ENCODE measurements at regions of chr16 and their contacts with region 1.

Region 1: DNA sequence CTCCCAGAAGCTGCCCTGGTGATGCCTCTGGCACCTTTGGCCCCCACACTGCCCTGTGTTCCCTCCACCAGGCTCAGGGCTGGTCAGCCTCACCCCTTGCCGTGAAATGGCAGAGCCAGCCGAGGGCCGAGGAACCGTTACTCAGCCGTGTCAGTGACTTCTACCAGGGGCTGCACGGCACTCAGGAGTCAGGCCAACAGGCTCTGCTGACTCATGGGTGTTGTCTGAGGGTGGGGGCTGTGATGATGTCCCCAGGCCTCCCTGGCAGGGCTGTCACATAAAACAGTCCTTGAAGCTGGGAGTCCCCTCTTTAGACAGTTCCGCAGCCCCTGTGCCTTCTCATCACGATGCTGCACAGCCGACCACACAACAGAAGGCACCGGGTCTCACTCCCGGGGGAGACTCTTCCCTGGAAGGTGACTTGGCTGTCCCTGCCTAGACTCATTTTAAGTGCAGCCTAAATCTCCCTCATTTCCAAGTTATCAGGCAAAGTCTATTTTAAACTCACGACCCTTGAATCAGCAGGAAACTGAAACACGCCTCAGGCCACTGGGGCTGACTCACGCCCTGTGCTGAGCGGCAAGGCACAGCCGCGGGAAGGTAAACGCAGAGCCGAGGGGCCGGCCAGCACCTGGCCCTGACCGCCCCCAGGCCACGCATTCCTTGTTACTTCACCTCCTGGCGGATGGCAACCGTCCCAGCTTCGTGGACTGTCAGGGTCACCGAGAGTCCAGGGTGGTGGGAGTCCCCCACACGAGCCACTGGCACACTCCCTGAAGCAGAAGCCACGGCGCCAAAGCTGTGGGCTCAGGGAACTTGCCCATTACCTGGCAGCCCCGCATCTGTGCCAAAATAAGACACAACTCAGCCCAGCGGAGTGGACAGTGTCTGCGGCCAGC is 102.6 kb downstream of the ZNF778 start:
- DNase-seq: peak; percentile 84
- H3K4me3 ChIP-seq: no peak overlapping the region
- H3K27ac ChIP-seq: peak overlapping the region; percentile 77
- H3K4me1 ChIP-seq: peaks cover 85% of the 10 kb centered on the region
- H3K27me3 ChIP-seq: no peaks in the 10 kb centered on the region
- CTCF ChIP-seq: no peak
- POLR2A ChIP-seq: no peak

Region 2: DNA sequence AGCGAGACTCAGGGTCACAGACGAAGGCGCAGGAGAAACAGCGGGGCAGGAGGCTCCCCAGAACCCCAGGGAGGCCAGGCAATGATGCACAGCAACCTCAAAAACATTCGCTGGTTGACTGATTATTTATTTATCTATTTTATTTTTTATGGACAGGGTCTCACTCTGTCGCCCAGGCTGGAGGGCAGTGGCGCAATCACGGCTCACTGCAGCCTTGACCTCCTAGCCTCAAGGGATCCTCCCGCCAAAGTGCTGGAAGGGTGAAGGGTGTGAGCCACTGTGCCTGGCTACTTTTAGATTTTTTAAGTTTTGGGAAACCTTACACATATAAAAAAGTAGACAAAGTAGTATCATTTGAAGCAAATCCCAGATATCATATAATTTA is 19.2 kb before region 1 on chr16:
- CTCF ChIA-PET with region 1: interaction called, 8 read pairs
- POLR2A ChIA-PET with region 1: no interaction called
- dilution Hi-C with region 1: no loop called
- intact Hi-C with region 1: loop called (anchors 1 kb)
- DNase-seq: no peak
- H3K4me3 ChIP-seq: no peak overlapping the region
- H3K27ac ChIP-seq: peak overlapping the region; percentile 3
- H3K4me1 ChIP-seq: peaks cover 26% of the 10 kb centered on the region
- H3K27me3 ChIP-seq: no peaks in the 10 kb centered on the region
- CTCF ChIP-seq: no peak
- POLR2A ChIP-seq: no peak

Region 3: DNA sequence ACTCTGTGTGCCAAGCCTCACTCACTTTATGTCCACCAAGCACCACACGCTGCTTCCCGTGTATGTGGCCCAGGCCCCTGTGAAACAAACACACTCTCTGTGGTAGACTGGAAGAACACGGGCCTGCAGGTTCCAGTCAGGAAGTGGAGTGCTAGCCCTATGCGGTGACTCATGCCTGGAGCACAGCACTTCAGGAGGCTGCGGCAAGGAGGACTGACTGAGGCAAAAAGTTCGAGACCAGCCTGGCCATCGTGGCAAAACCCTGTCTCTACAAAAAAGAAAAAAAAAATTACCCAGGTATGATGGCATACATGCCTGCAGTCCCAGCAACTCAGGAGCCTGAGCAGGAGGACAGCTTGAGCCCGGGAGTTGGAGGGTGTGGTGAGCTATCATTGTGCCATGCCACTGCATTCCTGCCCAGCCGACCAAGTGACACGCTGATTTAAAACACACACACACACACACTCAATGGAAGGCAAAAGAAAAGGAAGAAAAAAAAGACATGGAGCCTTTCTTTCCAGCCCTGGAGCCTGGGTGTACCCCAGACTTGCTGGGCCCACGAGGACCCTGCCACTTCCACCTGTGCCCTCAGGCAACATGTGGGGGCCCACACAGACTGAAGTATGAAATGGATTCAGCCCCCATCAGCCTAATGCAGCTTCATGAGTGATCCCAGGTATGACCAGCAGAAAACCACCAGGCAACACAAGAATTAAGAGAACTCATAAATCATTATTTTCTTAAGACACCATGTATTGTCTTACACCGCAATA is 43.7 kb after region 1 on chr16:
- CTCF ChIA-PET with region 1: no interaction called
- POLR2A ChIA-PET with region 1: no interaction called
- dilution Hi-C with region 1: no loop called
- intact Hi-C with region 1: loop called (anchors 1 kb)
- DNase-seq: peak; percentile 87
- H3K4me3 ChIP-seq: no peak overlapping the region
- H3K27ac ChIP-seq: peak overlapping the region; percentile 16
- H3K4me1 ChIP-seq: peaks cover 61% of the 10 kb centered on the region
- H3K27me3 ChIP-seq: no peaks in the 10 kb centered on the region
- CTCF ChIP-seq: no peak
- POLR2A ChIP-seq: no peak

Region 4: GRCh38 chr16:89507834-89508590 is 187.9 kb after region 1 on chr16 and contains the start of gene SPG7:
- CTCF ChIA-PET with region 1: interaction called, 5 read pairs
- POLR2A ChIA-PET with region 1: no interaction called
- dilution Hi-C with region 1: no loop called
- intact Hi-C with region 1: loop called (anchors 1 kb)
- DNase-seq: peak; percentile 91
- H3K4me3 ChIP-seq: peak within 1 kb of the TSS; percentile 15 to 80 (median 65)
- H3K27ac ChIP-seq: peak within 1 kb of the TSS; percentile 89
- H3K4me1 ChIP-seq: peaks cover 28% of the 10 kb centered on the region
- H3K27me3 ChIP-seq: no peaks in the 10 kb centered on the region
- CTCF ChIP-seq: no peak
- POLR2A ChIP-seq: peak; percentile 86
- total RNA-seq, gene SPG7: 139 and 146 TPM in 2 replicates